ENCODE measurements at regions of chr16 and their contacts with region 1.

Region 1: GRCh38 chr16:84617791-84618580 is at the start of gene COTL1:
- DNase-seq: peak; percentile 88 to 98 (median 96)
- H3K4me3 ChIP-seq: peak within 1 kb of the TSS; percentile 62 to 95 (median 84)
- H3K27ac ChIP-seq: peak within 1 kb of the TSS in 47 of 59 donors; percentile 4 to 86 (median 67)
- H3K27me3 ChIP-seq: no peaks in the 10 kb centered on the region
- CTCF ChIP-seq: peak in 5 of 56 donors; percentile 4 to 34 (median 13)
- total RNA-seq, gene COTL1: 43.3 to 111 (median 76.2) TPM

Region 2: DNA sequence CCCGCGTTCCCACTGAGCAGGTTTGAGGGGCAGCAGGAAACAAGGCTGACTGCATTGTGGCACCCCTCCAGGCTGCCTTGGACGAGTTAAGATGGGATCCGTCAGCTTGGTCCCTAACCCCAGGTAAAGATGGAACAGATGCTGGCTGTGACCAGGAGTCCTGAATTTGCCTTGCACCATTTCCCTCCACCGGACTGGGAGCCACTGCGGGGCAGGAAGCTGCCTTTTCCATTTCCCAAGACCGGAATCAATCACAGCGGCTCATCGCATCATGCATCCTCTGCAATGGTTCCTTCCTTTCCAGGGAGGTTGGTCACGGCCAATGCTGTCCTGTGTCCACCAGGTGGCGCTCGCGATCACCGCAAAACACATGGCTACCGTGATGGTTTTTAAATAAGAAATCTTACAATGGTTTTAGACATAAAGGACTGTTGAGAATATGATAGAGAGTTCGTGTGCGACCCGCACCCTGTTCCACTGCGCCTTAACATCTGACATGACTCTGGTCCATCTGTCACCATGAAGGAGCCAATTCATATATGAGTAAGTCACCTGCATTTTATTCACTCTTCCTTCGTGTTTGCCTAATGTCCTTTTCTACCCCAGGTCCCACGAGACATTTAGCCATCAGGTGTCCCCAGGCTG is 106.7 kb before region 1 on chr16:
- intact Hi-C with region 1: loop called (anchors 1 to 2 kb)
- DNase-seq: peak; percentile 72 to 89 (median 83)
- H3K4me3 ChIP-seq: peak overlapping the region in 58 of 59 donors; percentile 8 to 72 (median 46)
- H3K27ac ChIP-seq: peak overlapping the region in 9 of 59 donors; percentile 9 to 79 (median 62)
- H3K27me3 ChIP-seq: no peaks in the 10 kb centered on the region
- CTCF ChIP-seq: peak; percentile 85 to 100 (median 98)

Region 3: GRCh38 chr16:84585886-84586285 is 32.1 kb before region 1 on chr16:
- intact Hi-C with region 1: loop called in 1 of 2 experiments (anchors 1 kb)
- DNase-seq: peak in 9 of 10 donors; percentile 60 to 88 (median 77)
- H3K4me3 ChIP-seq: peak overlapping the region in 35 of 59 donors; percentile 0 to 47 (median 23)
- H3K27ac ChIP-seq: peak overlapping the region in 30 of 59 donors; percentile 7 to 68 (median 34)
- H3K27me3 ChIP-seq: no peaks in the 10 kb centered on the region
- CTCF ChIP-seq: peak in 1 of 56 donors; percentile 14

Region 4: GRCh38 chr16:84738255-84739038 is 120.5 kb after region 1 on chr16:
- intact Hi-C with region 1: no loop called
- DNase-seq: peak; percentile 55 to 85 (median 72)
- H3K4me3 ChIP-seq: peak overlapping the region in 17 of 59 donors; percentile 11 to 53 (median 28)
- H3K27ac ChIP-seq: peak overlapping the region in 18 of 59 donors; percentile 1 to 59 (median 18)
- H3K27me3 ChIP-seq: no peaks in the 10 kb centered on the region
- CTCF ChIP-seq: peak; percentile 76 to 98 (median 91)